MCF 10A (cell line): ENCODE measurements at regions of chr17 and their contacts with region 1.

Region 1: GRCh38 chr17:48928876-48929811 is 15.5 kb downstream of the SNF8 start:
- DNase-seq: no peak
- H3K4me3 Mint-ChIP-seq: no peak overlapping the region
- H3K27ac Mint-ChIP-seq: peak overlapping the region; percentile 14
- H3K4me1 Mint-ChIP-seq: peaks cover 19% of the 10 kb centered on the region
- H3K27me3 Mint-ChIP-seq: no peaks in the 10 kb centered on the region
- CTCF ChIP-seq: no peak

Region 2: DNA sequence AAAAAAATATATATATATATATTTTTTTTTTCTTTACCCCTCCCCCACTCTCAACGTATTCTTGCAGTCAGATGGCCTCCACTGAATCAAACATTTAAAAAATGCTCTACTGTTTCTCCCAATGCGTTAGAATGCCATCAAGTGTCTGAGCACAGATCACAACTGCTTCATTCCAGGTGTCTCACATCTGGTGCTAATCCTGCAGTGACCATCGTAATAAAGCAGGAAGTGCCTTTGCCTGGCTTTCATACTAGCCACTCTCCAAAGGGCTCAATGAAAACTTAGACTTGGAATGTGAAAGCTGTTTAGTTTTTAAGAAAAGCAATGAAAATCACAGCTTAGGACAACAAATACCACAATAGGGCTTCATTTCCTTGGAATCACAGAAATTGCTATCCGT is 536.3 kb before region 1 on chr17:
- CTCF ChIA-PET with region 1: no interaction called
- POLR2A ChIA-PET with region 1: no interaction called
- intact Hi-C with region 1: no loop called
- DNase-seq: no peak
- H3K4me3 Mint-ChIP-seq: no peak overlapping the region
- H3K27ac Mint-ChIP-seq: no peak overlapping the region
- H3K4me1 Mint-ChIP-seq: no peaks in the 10 kb centered on the region
- H3K27me3 Mint-ChIP-seq: peaks cover 45% of the 10 kb centered on the region
- CTCF ChIP-seq: no peak

Region 3: GRCh38 chr17:48860034-48860433 is 69.1 kb before region 1 on chr17:
- CTCF ChIA-PET with region 1: no interaction called
- POLR2A ChIA-PET with region 1: no interaction called
- intact Hi-C with region 1: no loop called
- DNase-seq: no peak
- H3K4me3 Mint-ChIP-seq: no peak overlapping the region
- H3K27ac Mint-ChIP-seq: no peak overlapping the region
- H3K4me1 Mint-ChIP-seq: no peaks in the 10 kb centered on the region
- H3K27me3 Mint-ChIP-seq: no peaks in the 10 kb centered on the region
- CTCF ChIP-seq: no peak

Region 4: GRCh38 chr17:48908047-48908843 is 20.9 kb before region 1 on chr17 and contains the start of gene UBE2Z:
- CTCF ChIA-PET with region 1: no interaction called
- POLR2A ChIA-PET with region 1: interaction called, 14 read pairs
- intact Hi-C with region 1: no loop called
- DNase-seq: peak; percentile 93
- H3K4me3 Mint-ChIP-seq: peak within 1 kb of the TSS; percentile 93
- H3K27ac Mint-ChIP-seq: peak within 1 kb of the TSS; percentile 95
- H3K4me1 Mint-ChIP-seq: peaks cover 32% of the 10 kb centered on the region
- H3K27me3 Mint-ChIP-seq: no peaks in the 10 kb centered on the region
- CTCF ChIP-seq: no peak
- total RNA-seq, gene UBE2Z: 106 and 115 TPM in 2 replicates

Region 5: DNA sequence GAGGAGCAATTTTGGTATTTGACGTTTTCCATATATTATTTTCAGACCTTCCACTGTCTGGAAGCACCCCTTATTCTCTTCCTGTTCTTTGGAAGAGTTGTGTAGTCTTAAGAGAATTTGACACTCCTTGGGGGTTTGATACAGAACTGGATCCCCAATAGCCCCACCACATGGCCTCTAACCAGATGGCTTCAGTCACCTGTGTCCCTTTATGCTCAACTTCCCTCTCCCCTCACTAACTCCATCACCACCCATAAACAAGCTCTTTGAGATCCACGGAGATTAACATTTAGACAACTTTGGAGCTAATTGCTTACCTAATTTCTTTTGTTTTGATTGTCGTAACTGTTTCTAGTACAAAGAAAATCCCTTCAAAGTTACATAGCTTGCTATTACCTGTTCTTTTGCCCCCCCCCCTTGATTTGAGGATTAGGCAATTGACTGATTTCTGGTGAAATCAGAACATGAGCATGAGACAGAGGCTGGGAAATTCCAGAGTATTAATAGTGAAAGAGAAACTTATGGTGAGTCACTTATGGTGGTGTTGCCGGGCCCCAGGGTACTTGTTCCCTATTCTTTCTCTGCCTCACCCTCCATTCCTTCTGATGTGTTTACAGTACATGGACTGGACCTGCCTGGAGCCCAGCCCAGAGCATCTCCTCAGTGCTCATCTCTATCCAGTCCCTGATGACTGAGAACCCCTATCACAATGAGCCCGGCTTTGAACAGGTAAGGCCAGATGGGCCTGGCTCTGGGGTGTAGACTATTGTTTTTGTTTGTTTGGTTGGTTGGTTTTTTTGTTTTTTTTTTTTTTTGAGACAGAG is 13.5 kb before region 1 on chr17:
- CTCF ChIA-PET with region 1: no interaction called
- POLR2A ChIA-PET with region 1: interaction called, 14 read pairs
- intact Hi-C with region 1: no loop called
- DNase-seq: peak; percentile 94
- H3K4me3 Mint-ChIP-seq: peak overlapping the region; percentile 68
- H3K27ac Mint-ChIP-seq: peak overlapping the region; percentile 98
- H3K4me1 Mint-ChIP-seq: peaks cover 39% of the 10 kb centered on the region
- H3K27me3 Mint-ChIP-seq: no peaks in the 10 kb centered on the region
- CTCF ChIP-seq: no peak

Region 6: GRCh38 chr17:48985436-48986245 is 56.5 kb after region 1 on chr17:
- CTCF ChIA-PET with region 1: no interaction called
- POLR2A ChIA-PET with region 1: no interaction called
- intact Hi-C with region 1: no loop called
- DNase-seq: no peak
- H3K4me3 Mint-ChIP-seq: no peak overlapping the region
- H3K27ac Mint-ChIP-seq: no peak overlapping the region
- H3K4me1 Mint-ChIP-seq: no peaks in the 10 kb centered on the region
- H3K27me3 Mint-ChIP-seq: peaks cover 30% of the 10 kb centered on the region
- CTCF ChIP-seq: no peak